Activated CD8-positive, alpha-beta T cell treated with anti-CD3 and anti-CD28 coated beads, Interleukin-2, amount 10 ng/mL, durations not matched to agents 7 days and 5 days (primary cell): ENCODE measurements at regions of chr6 and their contacts with region 1.

Region 1: GRCh38 chr6:116561377-116562018 is 7.9 kb downstream of the CALHM4 start:
- DNase-seq: peak; percentile 74
- ATAC-seq: peak; percentile 65
- H3K4me3 Mint-ChIP-seq: no peak overlapping the region
- H3K27ac Mint-ChIP-seq: no peak overlapping the region
- H3K4me1 Mint-ChIP-seq: peaks cover 8% of the 10 kb centered on the region
- H3K27me3 Mint-ChIP-seq: peaks cover 15% of the 10 kb centered on the region

Region 2: DNA sequence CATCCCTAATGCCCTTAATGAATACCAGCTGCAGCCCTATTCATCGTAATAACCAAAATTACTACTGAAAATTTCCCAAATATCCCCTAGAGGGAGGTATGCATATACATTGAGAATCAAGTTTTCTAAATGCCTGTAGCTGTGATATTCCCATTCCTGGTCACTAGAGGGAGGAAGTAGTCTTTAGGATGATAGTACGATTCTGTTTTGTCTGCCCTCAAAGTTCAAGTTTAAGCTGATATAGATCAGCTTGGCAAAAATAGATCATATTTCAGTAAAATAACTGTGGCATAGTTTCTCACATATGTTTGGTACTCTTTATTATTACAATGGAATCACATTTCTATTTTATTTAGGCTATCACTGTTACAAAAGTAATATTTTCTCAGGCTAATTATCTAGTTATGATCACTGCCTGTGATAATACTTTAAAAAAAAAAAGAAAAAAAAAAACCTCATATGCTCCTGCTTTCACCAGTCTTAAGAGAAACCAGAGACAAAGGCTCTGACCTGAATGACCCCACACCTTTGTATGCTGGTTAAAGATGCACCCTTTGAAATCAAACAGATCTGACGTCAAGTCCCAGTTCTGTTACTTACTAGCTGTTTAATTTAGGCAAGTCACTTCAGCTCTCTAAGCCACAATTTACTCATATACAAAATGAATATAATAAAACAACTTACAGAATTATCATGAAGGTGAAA is 292.8 kb before region 1 on chr6:
- CTCF ChIA-PET with region 1: interaction called, 10 read pairs
- POLR2A ChIA-PET with region 1: no interaction called
- DNase-seq: no peak
- ATAC-seq: peak; percentile 66
- H3K4me3 Mint-ChIP-seq: no peak overlapping the region
- H3K27ac Mint-ChIP-seq: no peak overlapping the region
- H3K4me1 Mint-ChIP-seq: peaks cover 3% of the 10 kb centered on the region
- H3K27me3 Mint-ChIP-seq: no peaks in the 10 kb centered on the region

Region 3: GRCh38 chr6:116287689-116288282 is 273.7 kb before region 1 on chr6:
- CTCF ChIA-PET with region 1: interaction called, 18 read pairs
- POLR2A ChIA-PET with region 1: no interaction called
- DNase-seq: no peak
- ATAC-seq: peak; percentile 36
- H3K4me3 Mint-ChIP-seq: no peak overlapping the region
- H3K27ac Mint-ChIP-seq: no peak overlapping the region
- H3K4me1 Mint-ChIP-seq: no peaks in the 10 kb centered on the region
- H3K27me3 Mint-ChIP-seq: no peaks in the 10 kb centered on the region

Region 4: DNA sequence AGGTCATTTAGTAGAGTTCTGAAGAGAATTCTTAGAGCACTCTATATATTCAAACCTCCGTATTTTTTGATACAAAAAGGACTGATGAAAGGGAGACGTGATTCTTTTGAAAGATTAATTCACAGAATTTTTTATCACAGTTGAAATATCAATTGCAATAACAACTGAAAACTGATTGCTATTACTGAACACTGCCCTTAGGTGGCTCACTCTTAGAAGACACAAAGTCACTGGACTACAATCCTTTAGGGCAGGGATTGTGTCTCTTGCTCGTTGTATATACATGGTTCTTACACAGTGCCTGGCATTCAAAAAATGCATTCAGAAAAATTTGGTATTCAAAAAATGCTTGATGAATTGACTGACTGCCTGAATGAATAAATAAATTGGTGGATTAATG is 117.4 kb before region 1 on chr6:
- CTCF ChIA-PET with region 1: interaction called, 12 read pairs
- POLR2A ChIA-PET with region 1: no interaction called
- DNase-seq: no peak
- ATAC-seq: peak; percentile 73
- H3K4me3 Mint-ChIP-seq: no peak overlapping the region
- H3K27ac Mint-ChIP-seq: no peak overlapping the region
- H3K4me1 Mint-ChIP-seq: peaks cover 24% of the 10 kb centered on the region
- H3K27me3 Mint-ChIP-seq: peaks cover 34% of the 10 kb centered on the region

Region 5: DNA sequence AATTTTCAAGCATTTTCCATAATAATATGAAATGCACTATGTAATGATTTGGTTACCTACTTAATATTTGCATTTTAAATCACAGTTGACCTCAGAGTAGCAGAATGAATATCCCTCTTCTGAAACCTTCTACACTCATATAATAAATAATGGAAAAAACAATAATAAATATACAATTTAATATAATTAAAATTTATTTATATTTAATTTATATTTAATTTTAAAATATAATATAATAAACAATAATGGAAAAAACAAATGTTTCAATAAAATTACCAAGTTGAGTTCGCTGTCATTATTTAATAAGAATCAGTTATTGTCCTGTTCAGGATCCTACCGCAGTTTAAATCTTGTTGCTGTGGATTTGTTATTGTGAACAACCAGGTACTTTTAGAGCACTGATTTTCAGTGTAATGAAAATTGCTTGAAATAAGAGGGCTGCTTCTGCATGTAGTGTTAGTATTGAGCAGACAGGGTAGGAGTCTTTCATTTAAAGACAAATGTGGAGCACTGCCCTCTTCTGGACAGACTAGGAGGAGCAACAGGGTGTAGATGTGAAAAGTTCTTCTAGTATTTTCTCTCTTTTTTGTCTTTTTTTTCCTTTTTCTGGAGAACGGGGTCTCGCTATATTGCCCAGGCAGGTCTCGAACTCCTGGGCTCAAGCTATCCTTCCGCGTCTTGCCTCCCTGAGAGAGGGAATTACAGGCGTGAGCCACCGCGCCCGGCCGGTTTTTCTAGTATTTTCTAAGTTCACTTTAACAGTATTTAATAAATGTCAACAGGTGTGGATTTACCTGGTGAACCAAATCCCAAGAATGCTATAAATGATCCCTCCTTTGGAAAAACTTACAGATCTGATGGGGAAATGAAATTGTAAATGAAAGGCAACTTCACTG is 29.6 kb before region 1 on chr6:
- CTCF ChIA-PET with region 1: interaction called, 14 read pairs
- POLR2A ChIA-PET with region 1: no interaction called
- DNase-seq: peak; percentile 78
- ATAC-seq: peak; percentile 93
- H3K4me3 Mint-ChIP-seq: no peak overlapping the region
- H3K27ac Mint-ChIP-seq: no peak overlapping the region
- H3K4me1 Mint-ChIP-seq: no peaks in the 10 kb centered on the region
- H3K27me3 Mint-ChIP-seq: peaks cover 38% of the 10 kb centered on the region

Region 6: DNA sequence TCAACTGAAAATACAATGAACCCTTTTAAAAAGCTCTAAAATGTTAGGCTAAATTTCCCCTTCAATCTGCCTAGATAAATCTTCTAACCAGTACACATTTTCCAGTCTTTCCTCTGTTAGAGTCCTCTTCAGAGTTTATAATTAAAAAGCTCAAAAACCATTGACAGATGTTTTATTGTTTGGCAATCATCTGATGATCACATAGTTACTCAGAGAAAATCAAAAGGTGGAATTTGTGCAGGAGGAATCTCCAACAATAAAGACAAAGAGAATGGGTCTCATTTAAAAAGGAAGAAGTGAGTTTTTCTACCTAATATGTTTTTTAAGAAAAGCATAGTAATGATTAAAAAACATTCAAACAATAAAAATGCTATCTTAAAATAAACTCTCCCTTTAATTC is 19.1 kb before region 1 on chr6:
- CTCF ChIA-PET with region 1: interaction called, 18 read pairs
- POLR2A ChIA-PET with region 1: no interaction called
- DNase-seq: no peak
- ATAC-seq: no peak
- H3K4me3 Mint-ChIP-seq: no peak overlapping the region
- H3K27ac Mint-ChIP-seq: no peak overlapping the region
- H3K4me1 Mint-ChIP-seq: no peaks in the 10 kb centered on the region
- H3K27me3 Mint-ChIP-seq: peaks cover 39% of the 10 kb centered on the region

Region 7: DNA sequence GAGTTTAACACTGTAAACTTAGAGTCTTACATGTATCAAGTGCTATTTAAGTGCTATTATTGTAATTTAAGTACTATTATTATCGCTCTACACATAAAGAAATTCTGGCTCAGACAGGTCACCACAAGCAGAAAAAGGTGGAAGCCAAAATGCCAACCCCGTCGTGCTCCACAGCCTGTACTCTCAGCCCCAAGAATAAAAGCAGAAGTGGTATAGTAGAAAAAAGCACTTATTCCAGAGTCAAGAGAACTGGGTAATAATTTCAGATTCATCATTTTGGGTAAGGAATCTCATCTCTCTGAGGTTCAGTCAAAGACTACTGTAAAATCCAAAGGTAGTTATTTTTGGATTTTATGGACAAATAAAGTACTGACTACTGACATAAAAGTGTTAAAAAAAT is 106.1 kb after region 1 on chr6:
- CTCF ChIA-PET with region 1: interaction called, 10 read pairs
- POLR2A ChIA-PET with region 1: no interaction called
- DNase-seq: no peak
- ATAC-seq: no peak
- H3K4me3 Mint-ChIP-seq: peak overlapping the region; percentile 100
- H3K27ac Mint-ChIP-seq: peak overlapping the region; percentile 98
- H3K4me1 Mint-ChIP-seq: peaks cover 40% of the 10 kb centered on the region
- H3K27me3 Mint-ChIP-seq: peaks cover 13% of the 10 kb centered on the region

Region 8: GRCh38 chr6:117143647-117144046 is 582.1 kb after region 1 on chr6:
- CTCF ChIA-PET with region 1: no interaction called
- POLR2A ChIA-PET with region 1: no interaction called
- DNase-seq: no peak
- ATAC-seq: no peak
- H3K4me3 Mint-ChIP-seq: no peak overlapping the region
- H3K27ac Mint-ChIP-seq: no peak overlapping the region
- H3K4me1 Mint-ChIP-seq: no peaks in the 10 kb centered on the region
- H3K27me3 Mint-ChIP-seq: no peaks in the 10 kb centered on the region